ENCODE measurements at regions of chr3 and their contacts with region 1.

Region 1: DNA sequence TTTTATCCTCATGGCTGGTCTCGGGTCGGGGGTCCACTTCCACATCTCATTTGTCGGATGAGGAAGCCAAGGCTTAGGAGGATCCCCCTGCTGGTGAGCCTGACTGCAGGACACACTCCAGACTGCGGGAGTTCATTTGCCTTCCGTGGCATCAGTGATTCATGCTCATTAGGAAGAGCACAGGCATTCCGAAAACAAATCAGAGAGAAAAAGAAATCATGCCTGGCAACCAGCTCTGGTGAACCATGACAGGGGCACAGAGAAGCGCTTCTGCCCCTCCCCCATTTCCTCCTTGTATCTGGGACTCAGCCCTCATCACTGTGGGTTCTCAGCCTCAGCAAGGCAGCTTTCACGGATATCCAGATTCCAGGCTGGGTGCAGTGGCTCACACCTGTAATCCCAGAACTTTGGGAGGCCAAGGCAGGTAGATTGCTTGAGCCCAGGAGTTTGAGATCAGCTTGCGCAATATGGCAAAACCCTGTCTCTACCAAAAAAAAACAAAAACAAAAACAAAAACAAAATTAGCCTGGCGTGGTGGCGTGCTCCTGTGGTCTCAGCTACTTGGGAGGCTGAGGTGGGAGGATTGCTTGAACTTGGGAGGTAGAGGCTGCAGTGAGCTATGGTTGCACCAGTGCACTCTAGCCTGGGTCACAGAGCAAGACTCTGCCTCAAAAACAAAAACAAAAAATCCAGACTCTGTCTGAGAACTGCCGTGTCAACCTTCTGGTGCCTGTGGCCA is 28.4 kb downstream of the IRAK2 start:
- DNase-seq: peak; percentile 89
- ATAC-seq: peak; percentile 64
- H3K4me3 ChIP-seq: peak overlapping the region in 3 of 5 experiments; percentile 11 to 53 (median 32)
- H3K4me3 Mint-ChIP-seq: peak overlapping the region; percentile 75
- H3K27ac ChIP-seq: peak overlapping the region; percentile 84 to 95
- H3K27ac Mint-ChIP-seq: peak overlapping the region; percentile 96
- H3K4me1 ChIP-seq: peaks cover 89 to 94% of the 10 kb centered on the region in 2 donors
- H3K4me1 Mint-ChIP-seq: peaks cover 82% of the 10 kb centered on the region
- H3K27me3 ChIP-seq: no peaks in the 10 kb centered on the region
- H3K27me3 Mint-ChIP-seq: no peaks in the 10 kb centered on the region
- CTCF ChIP-seq: peak; percentile 39

Region 2: GRCh38 chr3:9912294-9912935 is 280.7 kb before region 1 on chr3:
- CTCF ChIA-PET with region 1: no interaction called
- POLR2A ChIA-PET with region 1: no interaction called
- intact Hi-C with region 1: no loop called
- DNase-seq: no peak
- ATAC-seq: no peak
- H3K4me3 ChIP-seq: no peak overlapping the region
- H3K4me3 Mint-ChIP-seq: no peak overlapping the region
- H3K27ac ChIP-seq: no peak overlapping the region
- H3K27ac Mint-ChIP-seq: no peak overlapping the region
- H3K4me1 ChIP-seq: peaks cover 17 to 20% of the 10 kb centered on the region in 2 donors
- H3K4me1 Mint-ChIP-seq: peaks cover 17% of the 10 kb centered on the region
- H3K27me3 ChIP-seq: peaks cover 0 to 29% (median 9%) of the 10 kb centered on the region in 4 experiments
- H3K27me3 Mint-ChIP-seq: peaks cover 12% of the 10 kb centered on the region
- CTCF ChIP-seq: no peak

Region 3: GRCh38 chr3:10142707-10143566 is 50.2 kb before region 1 on chr3:
- CTCF ChIA-PET with region 1: interaction called, 4 read pairs
- POLR2A ChIA-PET with region 1: interaction called, 10 read pairs
- intact Hi-C with region 1: loop called (anchors 1 kb)
- DNase-seq: peak; percentile 31
- ATAC-seq: no peak
- H3K4me3 ChIP-seq: peak overlapping the region; percentile 8 to 91 (median 77)
- H3K4me3 Mint-ChIP-seq: peak overlapping the region; percentile 95
- H3K27ac ChIP-seq: peak overlapping the region; percentile 88 to 96
- H3K27ac Mint-ChIP-seq: peak overlapping the region; percentile 97
- H3K4me1 ChIP-seq: peaks cover 28 to 50% of the 10 kb centered on the region in 2 donors
- H3K4me1 Mint-ChIP-seq: peaks cover 32% of the 10 kb centered on the region
- H3K27me3 ChIP-seq: no peaks in the 10 kb centered on the region
- H3K27me3 Mint-ChIP-seq: no peaks in the 10 kb centered on the region
- CTCF ChIP-seq: no peak

Region 4: GRCh38 chr3:10164546-10165393 is 28.4 kb before region 1 on chr3 and contains the start of gene IRAK2:
- CTCF ChIA-PET with region 1: interaction called, 20 read pairs
- POLR2A ChIA-PET with region 1: interaction called, 4 read pairs
- intact Hi-C with region 1: loop called (anchors 2 kb)
- DNase-seq: peak; percentile 83
- ATAC-seq: peak; percentile 91
- H3K4me3 ChIP-seq: peak within 1 kb of the TSS; percentile 66 to 95 (median 84)
- H3K4me3 Mint-ChIP-seq: peak within 1 kb of the TSS; percentile 91
- H3K27ac ChIP-seq: peak within 1 kb of the TSS; percentile 43 to 79
- H3K27ac Mint-ChIP-seq: peak within 1 kb of the TSS; percentile 65
- H3K4me1 ChIP-seq: peaks cover 15 to 44% of the 10 kb centered on the region in 2 donors
- H3K4me1 Mint-ChIP-seq: peaks cover 37% of the 10 kb centered on the region
- H3K27me3 ChIP-seq: no peaks in the 10 kb centered on the region
- H3K27me3 Mint-ChIP-seq: no peaks in the 10 kb centered on the region
- CTCF ChIP-seq: peak; percentile 98
- total RNA-seq, gene IRAK2: 23.2 and 24.6 TPM in 2 replicates

Region 5: GRCh38 chr3:10180738-10181295 is 12.3 kb before region 1 on chr3:
- CTCF ChIA-PET with region 1: interaction called, 10 read pairs
- POLR2A ChIA-PET with region 1: interaction called, 8 read pairs
- intact Hi-C with region 1: loop called (anchors 1 kb)
- DNase-seq: no peak
- ATAC-seq: no peak
- H3K4me3 ChIP-seq: no peak overlapping the region
- H3K4me3 Mint-ChIP-seq: peak overlapping the region; percentile 70
- H3K27ac ChIP-seq: peak overlapping the region; percentile 12 to 66
- H3K27ac Mint-ChIP-seq: peak overlapping the region; percentile 84
- H3K4me1 ChIP-seq: peaks cover 18 to 31% of the 10 kb centered on the region in 2 donors
- H3K4me1 Mint-ChIP-seq: peaks cover 28% of the 10 kb centered on the region
- H3K27me3 ChIP-seq: no peaks in the 10 kb centered on the region
- H3K27me3 Mint-ChIP-seq: no peaks in the 10 kb centered on the region
- CTCF ChIP-seq: no peak

Region 6: DNA sequence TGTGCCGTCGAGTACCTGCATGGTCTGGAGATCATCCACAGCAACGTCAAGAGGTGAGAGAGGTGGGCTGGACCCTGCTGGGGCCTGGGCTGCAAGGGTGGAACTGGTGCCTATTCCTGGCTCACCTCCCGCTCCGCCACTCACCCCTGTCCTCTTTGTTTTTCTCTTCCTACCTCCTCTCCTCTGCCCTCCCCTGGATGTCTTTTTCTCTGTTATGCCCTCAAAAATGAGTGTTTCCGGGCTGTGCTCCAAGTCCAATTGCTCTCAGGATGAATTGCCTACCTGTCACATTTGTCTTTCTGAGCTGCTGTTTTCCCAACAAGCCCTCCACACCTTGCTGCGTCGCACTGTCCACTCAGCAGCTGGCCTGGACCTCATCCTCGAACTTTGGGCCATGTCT is 26.6 kb after region 1 on chr3:
- CTCF ChIA-PET with region 1: interaction called, 44 read pairs
- POLR2A ChIA-PET with region 1: interaction called, 16 read pairs
- intact Hi-C with region 1: loop called (anchors 1 kb)
- DNase-seq: no peak
- ATAC-seq: no peak
- H3K4me3 ChIP-seq: no peak overlapping the region
- H3K4me3 Mint-ChIP-seq: no peak overlapping the region
- H3K27ac ChIP-seq: peak overlapping the region in 1 of 2 donors; percentile 47
- H3K27ac Mint-ChIP-seq: peak overlapping the region; percentile 81
- H3K4me1 ChIP-seq: peaks cover 34 to 49% of the 10 kb centered on the region in 2 donors
- H3K4me1 Mint-ChIP-seq: peaks cover 49% of the 10 kb centered on the region
- H3K27me3 ChIP-seq: no peaks in the 10 kb centered on the region
- H3K27me3 Mint-ChIP-seq: no peaks in the 10 kb centered on the region
- CTCF ChIP-seq: no peak